ENCODE measurements at regions of chr5 and their contacts with region 1.

Region 1: GRCh38 chr5:115634343-115635132 is 8.7 kb upstream of the TMED7 start:
- DNase-seq: peak; percentile 78
- H3K4me3 ChIP-seq: peak overlapping the region in 2 of 3 experiments; percentile 21 to 55
- H3K27ac ChIP-seq: no peak overlapping the region
- H3K4me1 ChIP-seq: peaks cover 5% of the 10 kb centered on the region
- H3K27me3 ChIP-seq: peaks cover 2 to 5% of the 10 kb centered on the region in 2 experiments
- CTCF ChIP-seq: peak; percentile 75 to 89
- POLR2A ChIP-seq: no peak

Region 2: GRCh38 chr5:115809946-115810345 is 175.4 kb after region 1 on chr5:
- CTCF ChIA-PET with region 1: no interaction called
- POLR2A ChIA-PET with region 1: no interaction called
- dilution Hi-C with region 1: no loop called
- intact Hi-C with region 1: no loop called
- DNase-seq: peak; percentile 48
- H3K4me3 ChIP-seq: no peak overlapping the region
- H3K27ac ChIP-seq: no peak overlapping the region
- H3K4me1 ChIP-seq: peaks cover 17% of the 10 kb centered on the region
- H3K27me3 ChIP-seq: peaks cover 12 to 13% of the 10 kb centered on the region in 2 experiments
- CTCF ChIP-seq: no peak
- POLR2A ChIP-seq: no peak

Region 3: DNA sequence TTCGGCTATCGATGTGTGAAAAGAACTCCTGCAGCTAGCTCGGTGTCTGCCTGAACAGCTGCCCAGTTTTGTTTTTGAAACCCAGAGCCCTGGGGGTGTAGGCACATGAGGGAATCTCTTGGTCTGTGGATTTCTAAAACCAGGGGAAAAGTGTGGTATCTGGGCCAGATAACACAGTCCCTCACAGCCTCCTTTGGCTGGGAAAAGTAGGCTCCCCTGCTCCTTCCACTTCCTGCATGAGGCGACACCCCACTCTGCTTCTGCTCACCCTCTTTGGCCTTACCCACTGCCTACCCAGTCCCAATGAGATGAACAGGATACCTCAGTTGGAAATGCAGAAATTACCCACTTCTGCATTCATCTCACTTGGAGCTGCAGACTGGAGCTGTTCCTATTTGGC is 191.4 kb after region 1 on chr5:
- CTCF ChIA-PET with region 1: interaction called, 54 read pairs
- POLR2A ChIA-PET with region 1: no interaction called
- dilution Hi-C with region 1: no loop called
- intact Hi-C with region 1: loop called (anchors 1 kb)
- DNase-seq: no peak
- H3K4me3 ChIP-seq: no peak overlapping the region
- H3K27ac ChIP-seq: no peak overlapping the region
- H3K4me1 ChIP-seq: no peaks in the 10 kb centered on the region
- H3K27me3 ChIP-seq: peaks cover 0 to 3% of the 10 kb centered on the region in 2 experiments
- CTCF ChIP-seq: no peak
- POLR2A ChIP-seq: no peak

Region 4: DNA sequence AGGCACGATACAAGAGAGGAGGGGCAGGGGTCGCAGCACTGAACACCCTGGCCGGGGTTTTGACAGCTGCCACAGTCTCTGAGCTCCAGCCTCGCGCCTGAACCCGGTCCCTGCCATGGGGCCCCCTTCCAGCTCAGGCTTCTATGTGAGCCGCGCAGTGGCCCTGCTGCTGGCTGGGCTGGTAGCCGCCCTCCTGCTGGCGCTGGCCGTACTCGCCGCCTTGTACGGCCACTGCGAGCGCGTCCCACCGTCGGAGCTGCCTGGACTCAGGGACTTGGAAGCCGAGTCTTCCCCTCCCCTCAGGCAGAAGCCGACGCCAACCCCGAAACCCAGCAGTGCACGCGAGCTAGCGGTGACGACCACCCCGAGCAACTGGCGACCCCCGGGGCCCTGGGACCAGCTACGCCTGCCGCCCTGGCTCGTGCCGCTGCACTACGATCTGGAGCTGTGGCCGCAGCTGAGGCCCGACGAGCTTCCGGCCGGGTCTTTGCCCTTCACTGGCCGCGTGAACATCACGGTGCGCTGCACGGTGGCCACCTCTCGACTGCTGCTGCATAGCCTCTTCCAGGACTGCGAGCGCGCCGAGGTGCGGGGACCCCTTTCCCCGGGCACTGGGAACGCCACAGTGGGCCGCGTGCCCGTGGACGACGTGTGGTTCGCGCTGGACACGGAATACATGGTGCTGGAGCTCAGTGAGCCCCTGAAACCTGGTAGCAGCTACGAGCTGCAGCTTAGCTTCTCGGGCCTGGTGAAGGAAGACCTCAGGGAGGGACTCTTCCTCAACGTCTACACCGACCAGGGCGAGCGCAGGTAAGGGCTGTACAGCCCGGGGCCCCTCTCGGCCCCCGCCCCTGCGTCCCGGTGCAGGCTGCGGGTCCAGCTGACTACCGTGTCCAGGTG is 328.2 kb after region 1 on chr5:
- CTCF ChIA-PET with region 1: no interaction called
- POLR2A ChIA-PET with region 1: no interaction called
- dilution Hi-C with region 1: no loop called
- intact Hi-C with region 1: loop called (anchors 5 kb)
- DNase-seq: peak; percentile 43
- H3K4me3 ChIP-seq: peak overlapping the region; percentile 12 to 48 (median 32)
- H3K27ac ChIP-seq: no peak overlapping the region
- H3K4me1 ChIP-seq: peaks cover 11% of the 10 kb centered on the region
- H3K27me3 ChIP-seq: peaks cover 3 to 40% of the 10 kb centered on the region in 2 experiments
- CTCF ChIP-seq: peak in 1 of 2 donors; percentile 9
- POLR2A ChIP-seq: no peak

Region 5: DNA sequence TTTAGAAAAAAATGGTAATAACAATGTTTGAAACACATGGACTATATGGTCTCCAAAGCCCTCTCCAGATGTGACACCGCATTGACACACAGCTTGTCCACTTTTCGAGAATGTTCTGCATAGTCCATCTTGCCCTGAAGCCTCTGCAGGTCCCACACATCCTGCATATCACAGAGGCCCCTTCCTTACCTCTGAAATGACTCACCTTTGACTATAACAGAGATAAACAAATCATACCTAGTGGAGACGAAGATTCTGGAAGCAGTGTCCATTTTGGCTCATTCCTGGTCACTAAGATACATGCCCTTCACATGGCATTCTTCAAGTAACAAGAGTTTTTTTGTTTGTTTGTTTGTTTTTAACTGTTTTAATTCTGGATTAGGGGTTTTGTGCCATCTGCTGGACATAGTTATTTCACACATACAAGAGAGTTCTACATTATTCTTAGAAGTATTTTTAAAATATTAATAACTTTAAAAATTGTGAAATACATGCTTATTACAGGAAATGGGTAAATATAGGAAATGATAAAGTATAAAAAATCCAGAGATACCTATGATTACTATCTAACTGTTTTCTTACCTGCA is 402.8 kb after region 1 on chr5:
- CTCF ChIA-PET with region 1: interaction called, 13 read pairs
- POLR2A ChIA-PET with region 1: no interaction called
- dilution Hi-C with region 1: no loop called
- intact Hi-C with region 1: loop called (anchors 1 kb)
- DNase-seq: peak; percentile 38
- H3K4me3 ChIP-seq: no peak overlapping the region
- H3K27ac ChIP-seq: no peak overlapping the region
- H3K4me1 ChIP-seq: peaks cover 2% of the 10 kb centered on the region
- H3K27me3 ChIP-seq: no peaks in the 10 kb centered on the region
- CTCF ChIP-seq: no peak
- POLR2A ChIP-seq: no peak

Measured in endothelial cell of umbilical vein (primary cell).